Common myeloid progenitor, CD34-positive (primary cell): ENCODE measurements at regions of chr9 and their contacts with region 1.

Region 1: GRCh38 chr9:93119953-93120845 is 13.9 kb downstream of the NINJ1 start:
- DNase-seq: peak; percentile 77 to 89 (median 86)
- H3K4me3 ChIP-seq: peak overlapping the region in 3 of 7 experiments; percentile 25 to 40 (median 34)
- H3K27ac ChIP-seq: peak overlapping the region in 1 of 2 experiments; percentile 49
- H3K4me1 ChIP-seq: peaks cover 0 to 48% (median 46%) of the 10 kb centered on the region in 4 experiments
- H3K27me3 ChIP-seq: no peaks in the 10 kb centered on the region

Region 2: GRCh38 chr9:93108291-93109041 is 11.7 kb before region 1 on chr9:
- CTCF ChIA-PET with region 1: interaction called, 76 read pairs
- POLR2A ChIA-PET with region 1: interaction called, 4 read pairs
- DNase-seq: no peak
- H3K4me3 ChIP-seq: no peak overlapping the region
- H3K27ac ChIP-seq: no peak overlapping the region
- H3K4me1 ChIP-seq: peaks cover 3 to 51% (median 40%) of the 10 kb centered on the region in 4 experiments
- H3K27me3 ChIP-seq: no peaks in the 10 kb centered on the region

Region 3: DNA sequence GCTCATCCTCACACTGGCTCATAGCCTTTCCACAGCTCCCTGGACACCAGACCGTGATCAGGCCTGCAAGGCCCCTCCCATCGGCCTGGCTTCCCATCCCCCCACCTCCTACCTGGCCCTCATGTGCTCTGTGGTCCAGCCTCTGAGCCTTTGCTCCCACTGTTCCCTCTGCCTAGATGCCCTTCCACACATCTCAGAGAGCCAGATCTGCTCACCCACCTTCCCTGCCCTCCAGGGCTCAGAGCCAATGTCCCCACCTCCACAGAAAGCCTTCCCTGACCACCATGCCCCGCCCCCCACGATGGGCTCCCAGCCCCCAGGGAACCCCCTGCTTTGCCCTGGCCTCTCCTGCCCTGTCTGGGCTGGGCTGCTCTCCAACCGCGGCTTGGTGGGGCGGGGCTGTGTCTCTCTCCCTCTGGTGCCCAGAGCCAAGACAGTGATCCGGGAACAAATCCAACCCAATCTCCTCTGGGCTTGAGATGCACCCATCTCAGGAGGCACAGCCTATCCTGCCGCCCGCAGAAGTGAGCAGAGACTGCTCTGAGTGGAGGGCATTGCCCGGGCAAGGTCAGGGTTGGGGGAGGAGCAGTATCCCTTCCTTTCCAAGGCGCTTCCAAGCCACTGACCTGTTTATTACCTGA is 12.2 kb after region 1 on chr9:
- CTCF ChIA-PET with region 1: interaction called, 10 read pairs
- POLR2A ChIA-PET with region 1: interaction called, 9 read pairs
- DNase-seq: no peak
- H3K4me3 ChIP-seq: peak overlapping the region in 3 of 7 experiments; percentile 75 to 86 (median 79)
- H3K27ac ChIP-seq: no peak overlapping the region
- H3K4me1 ChIP-seq: peaks cover 0 to 74% (median 65%) of the 10 kb centered on the region in 4 experiments
- H3K27me3 ChIP-seq: no peaks in the 10 kb centered on the region

Region 4: DNA sequence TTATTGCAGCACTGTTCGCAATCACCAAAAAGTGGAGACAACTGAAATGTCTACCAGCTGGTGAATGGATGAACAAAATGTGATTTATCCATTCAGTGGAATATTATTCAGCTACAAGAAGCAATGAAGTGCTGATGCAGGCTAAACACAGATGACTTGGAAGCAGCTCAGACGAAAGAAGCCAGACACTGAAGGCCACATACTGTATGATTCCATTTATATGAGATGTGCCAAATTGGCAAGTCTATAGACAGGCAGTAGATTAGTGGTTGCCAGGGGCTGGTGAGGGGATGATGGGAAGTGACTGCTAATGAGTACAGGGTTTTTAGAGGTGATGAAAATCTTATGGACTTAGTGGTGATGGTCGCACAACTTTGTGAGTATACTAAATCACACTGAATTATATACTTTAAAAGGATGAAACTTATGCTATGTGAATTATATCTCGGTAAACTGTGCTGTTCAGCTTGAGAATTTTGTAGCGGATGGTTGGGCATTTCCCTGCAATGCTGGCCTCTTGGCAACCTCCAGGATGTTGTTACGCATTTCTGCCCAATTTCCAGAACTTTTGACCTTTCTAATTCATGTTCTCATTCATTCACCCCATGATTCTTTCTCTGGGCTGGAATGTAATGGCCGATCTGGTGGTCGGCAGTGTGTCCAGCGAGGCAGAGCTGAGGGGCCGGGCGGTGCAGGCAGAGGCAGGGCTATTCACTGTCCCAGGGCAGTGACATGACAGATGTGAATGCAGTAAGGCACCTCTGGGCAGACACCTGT is 41.8 kb after region 1 on chr9:
- CTCF ChIA-PET with region 1: no interaction called
- POLR2A ChIA-PET with region 1: no interaction called
- DNase-seq: no peak
- H3K4me3 ChIP-seq: no peak overlapping the region
- H3K27ac ChIP-seq: no peak overlapping the region
- H3K4me1 ChIP-seq: peaks cover 0 to 4% (median 2%) of the 10 kb centered on the region in 4 experiments
- H3K27me3 ChIP-seq: peaks cover 0 to 5% (median 0%) of the 10 kb centered on the region in 5 experiments

Region 5: GRCh38 chr9:93252781-93253530 is 132.8 kb after region 1 on chr9:
- CTCF ChIA-PET with region 1: no interaction called
- POLR2A ChIA-PET with region 1: no interaction called
- DNase-seq: no peak
- H3K4me3 ChIP-seq: no peak overlapping the region
- H3K27ac ChIP-seq: no peak overlapping the region
- H3K4me1 ChIP-seq: no peaks in the 10 kb centered on the region
- H3K27me3 ChIP-seq: peaks cover 0 to 10% (median 0%) of the 10 kb centered on the region in 5 experiments